Posterior vena cava (tissue), 2 donors: ENCODE measurements at regions of chrX and their contacts with region 1.

Region 1: DNA sequence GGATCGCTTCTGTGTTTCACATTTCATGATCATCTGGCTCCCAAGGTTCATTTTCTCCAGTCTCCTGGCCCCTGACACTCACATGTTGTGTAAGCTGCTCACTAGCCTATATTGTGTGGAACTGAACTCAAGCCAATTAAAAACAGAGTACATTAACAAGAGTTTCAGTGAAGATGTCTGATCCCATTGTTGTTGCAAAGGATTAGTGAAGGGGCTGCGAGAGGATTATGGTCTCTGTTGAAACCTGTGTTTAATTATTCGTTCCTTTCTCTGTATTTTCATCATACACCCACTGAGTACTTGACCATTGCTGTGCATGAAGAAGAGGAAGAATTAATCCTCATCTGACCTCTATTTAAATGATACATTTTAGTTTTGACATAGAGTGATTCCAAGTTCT is 54.7 kb downstream of the AFF2 start:
- DNase-seq: no peak

Region 2: GRCh38 chrX:148109123-148109522 is 446.0 kb before region 1 on chrX:
- intact Hi-C with region 1: loop called in 1 of 2 experiments (anchors 5 kb)
- DNase-seq: no peak